ENCODE measurements at regions of chr3 and their contacts with region 1.

Region 1: GRCh38 chr3:151614-152189 is 44.9 kb upstream of the CHL1 start:
- DNase-seq: no peak
- ATAC-seq: no peak
- H3K4me3 Mint-ChIP-seq: no peak overlapping the region
- H3K27ac Mint-ChIP-seq: no peak overlapping the region
- H3K4me1 Mint-ChIP-seq: no peaks in the 10 kb centered on the region
- H3K27me3 Mint-ChIP-seq: peaks cover 4% of the 10 kb centered on the region

Region 2: GRCh38 chr3:111143-112069 is 40.3 kb before region 1 on chr3:
- CTCF ChIA-PET with region 1: no interaction called
- POLR2A ChIA-PET with region 1: no interaction called
- intact Hi-C with region 1: loop called in 1 of 2 experiments (anchors 1 kb)
- DNase-seq: no peak
- ATAC-seq: no peak
- H3K4me3 Mint-ChIP-seq: no peak overlapping the region
- H3K27ac Mint-ChIP-seq: no peak overlapping the region
- H3K4me1 Mint-ChIP-seq: no peaks in the 10 kb centered on the region
- H3K27me3 Mint-ChIP-seq: peaks cover 6% of the 10 kb centered on the region

Region 3: GRCh38 chr3:173886-174285 is 22.2 kb after region 1 on chr3:
- CTCF ChIA-PET with region 1: no interaction called
- POLR2A ChIA-PET with region 1: no interaction called
- intact Hi-C with region 1: no loop called
- DNase-seq: no peak
- ATAC-seq: no peak
- H3K4me3 Mint-ChIP-seq: no peak overlapping the region
- H3K27ac Mint-ChIP-seq: no peak overlapping the region
- H3K4me1 Mint-ChIP-seq: no peaks in the 10 kb centered on the region
- H3K27me3 Mint-ChIP-seq: peaks cover 5% of the 10 kb centered on the region

Region 4: GRCh38 chr3:318903-319302 is 167.2 kb after region 1 on chr3:
- CTCF ChIA-PET with region 1: no interaction called
- POLR2A ChIA-PET with region 1: no interaction called
- intact Hi-C with region 1: no loop called
- DNase-seq: no peak
- ATAC-seq: no peak
- H3K4me3 Mint-ChIP-seq: no peak overlapping the region
- H3K27ac Mint-ChIP-seq: no peak overlapping the region
- H3K4me1 Mint-ChIP-seq: no peaks in the 10 kb centered on the region
- H3K27me3 Mint-ChIP-seq: no peaks in the 10 kb centered on the region